ENCODE measurements at regions of chr22 and their contacts with region 1.

Region 1: GRCh38 chr22:33920927-33921524 is 750 bp upstream of the LARGE1 start:
- DNase-seq: peak; percentile 99
- ATAC-seq: peak; percentile 94

Region 2: DNA sequence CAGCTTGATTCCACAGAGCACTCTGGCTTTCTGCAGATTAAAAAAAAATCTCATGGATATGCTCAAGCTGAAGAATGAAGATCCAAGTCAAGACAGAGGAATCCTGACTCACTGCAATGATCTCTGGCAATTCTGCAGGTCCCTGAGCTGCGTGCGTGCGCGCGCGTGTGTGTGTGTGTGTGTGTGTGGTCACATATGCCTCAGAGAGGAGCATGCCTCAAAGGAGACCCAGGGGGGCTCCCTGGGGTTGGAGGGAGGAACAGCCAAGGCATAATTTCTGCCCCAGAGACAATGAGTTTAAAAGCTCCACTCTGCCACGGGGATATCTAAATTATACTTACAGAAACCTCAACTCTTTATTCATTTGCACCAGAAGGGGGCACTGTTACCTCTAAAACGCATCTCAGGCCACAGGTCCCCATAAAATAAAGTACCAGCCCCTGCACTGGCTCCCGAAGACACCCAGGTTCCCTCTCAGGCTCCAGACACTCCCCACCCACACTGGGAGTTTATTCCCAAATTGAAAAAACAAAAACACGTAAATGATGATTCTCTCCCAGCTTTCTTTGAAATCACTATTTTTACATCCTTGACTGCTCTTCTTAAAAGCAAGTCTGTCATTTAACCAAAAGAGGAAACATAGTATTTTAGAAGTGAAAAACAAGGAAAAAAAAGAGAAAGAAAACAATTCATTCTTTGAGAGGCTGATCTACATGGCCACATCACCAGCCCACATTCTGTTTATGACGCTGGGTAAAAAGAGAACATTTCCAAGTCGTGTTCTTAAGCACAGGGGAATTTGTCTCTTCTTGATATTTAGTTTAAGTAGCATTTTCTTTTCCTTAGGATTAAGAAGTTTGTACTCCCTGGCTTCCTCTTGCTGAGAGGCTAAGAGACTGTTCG is 401.7 kb before region 1 on chr22:
- intact Hi-C with region 1: loop called (anchors 5 kb)
- DNase-seq: no peak
- ATAC-seq: peak; percentile 73

Region 3: GRCh38 chr22:33658775-33659174 is 262.3 kb before region 1 on chr22:
- intact Hi-C with region 1: loop called (anchors 10 kb)
- DNase-seq: peak; percentile 61
- ATAC-seq: peak; percentile 67

Region 4: DNA sequence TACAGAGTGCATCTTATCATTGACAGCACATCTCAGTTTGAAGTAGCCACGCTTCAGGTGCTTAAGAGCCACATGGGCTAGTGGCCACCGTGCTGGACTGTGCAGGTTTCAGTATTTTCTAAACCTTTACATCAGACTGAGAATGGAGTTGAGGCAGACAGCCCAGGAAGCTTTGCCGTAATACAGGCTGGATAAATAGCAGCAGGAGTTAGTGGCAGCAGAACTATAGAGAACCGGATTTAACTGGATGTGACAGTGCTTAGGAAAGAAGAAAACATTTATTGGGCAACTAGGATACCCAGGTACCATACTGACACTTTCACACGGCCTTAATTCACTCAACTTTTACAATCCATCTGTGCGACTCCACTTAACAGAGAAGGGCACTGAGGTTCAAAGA is 146.2 kb before region 1 on chr22:
- intact Hi-C with region 1: loop called (anchors 10 kb)
- DNase-seq: no peak
- ATAC-seq: no peak

Region 5: GRCh38 chr22:34105461-34106062 is 184.5 kb after region 1 on chr22:
- intact Hi-C with region 1: loop called (anchors 5 kb)
- DNase-seq: peak; percentile 68
- ATAC-seq: peak; percentile 87

Region 6: DNA sequence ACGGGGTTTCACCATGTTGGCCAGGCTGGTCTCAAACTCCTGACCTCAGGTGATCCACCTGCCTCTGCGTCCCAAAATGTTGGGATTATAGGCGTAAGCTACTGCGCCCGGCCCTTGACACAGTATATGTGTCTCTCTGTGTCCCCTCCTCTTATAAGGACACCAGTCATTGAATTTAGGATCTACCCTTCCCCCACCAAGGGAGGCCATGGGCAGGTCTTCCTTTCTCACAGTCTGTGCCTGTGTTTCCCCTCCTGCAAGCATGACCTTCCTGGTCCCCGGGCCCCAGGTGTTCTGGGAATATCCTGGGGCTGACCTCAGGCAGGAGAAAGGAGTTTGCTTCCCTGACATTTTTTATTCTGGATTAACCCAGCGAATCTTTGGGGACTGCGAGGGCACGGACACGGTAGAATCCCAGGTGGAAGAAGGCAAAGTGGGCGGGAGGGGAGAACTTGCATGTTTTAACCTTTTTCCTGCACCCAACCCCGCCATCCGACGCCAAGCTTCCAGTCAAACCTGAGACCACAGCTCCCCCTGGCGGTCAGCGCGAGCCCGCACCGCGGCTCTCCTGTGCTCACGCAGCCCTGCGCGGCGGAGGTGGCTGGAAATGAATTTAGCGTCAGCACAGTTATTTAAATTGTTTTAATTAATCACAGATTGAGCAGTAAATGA is 1102.8 kb after region 1 on chr22:
- intact Hi-C with region 1: loop called (anchors 10 kb)
- DNase-seq: peak; percentile 79
- ATAC-seq: peak; percentile 82